ENCODE measurements at regions of chr4 and their contacts with region 1.

Region 1: GRCh38 chr4:118968005-118968404 is 79.4 kb downstream of the SYNPO2 start:
- DNase-seq: peak; percentile 41 to 72 (median 47)
- ATAC-seq: peak; percentile 85 to 90
- H3K4me3 ChIP-seq: no peak overlapping the region
- H3K27ac ChIP-seq: peak overlapping the region; percentile 80
- H3K4me1 ChIP-seq: peaks cover 8% of the 10 kb centered on the region
- H3K27me3 ChIP-seq: no peaks in the 10 kb centered on the region

Region 2: GRCh38 chr4:118765399-118765798 is 202.6 kb before region 1 on chr4:
- intact Hi-C with region 1: loop called (anchors 10 kb)
- DNase-seq: no peak
- ATAC-seq: peak; percentile 86 to 94
- H3K4me3 ChIP-seq: no peak overlapping the region
- H3K27ac ChIP-seq: no peak overlapping the region
- H3K4me1 ChIP-seq: peaks cover 5% of the 10 kb centered on the region
- H3K27me3 ChIP-seq: no peaks in the 10 kb centered on the region

Region 3: GRCh38 chr4:118772081-118772766 is 195.8 kb before region 1 on chr4:
- intact Hi-C with region 1: loop called (anchors 10 kb)
- DNase-seq: no peak
- ATAC-seq: peak; percentile 81 to 82
- H3K4me3 ChIP-seq: no peak overlapping the region
- H3K27ac ChIP-seq: peak overlapping the region; percentile 39
- H3K4me1 ChIP-seq: peaks cover 6% of the 10 kb centered on the region
- H3K27me3 ChIP-seq: no peaks in the 10 kb centered on the region

Region 4: DNA sequence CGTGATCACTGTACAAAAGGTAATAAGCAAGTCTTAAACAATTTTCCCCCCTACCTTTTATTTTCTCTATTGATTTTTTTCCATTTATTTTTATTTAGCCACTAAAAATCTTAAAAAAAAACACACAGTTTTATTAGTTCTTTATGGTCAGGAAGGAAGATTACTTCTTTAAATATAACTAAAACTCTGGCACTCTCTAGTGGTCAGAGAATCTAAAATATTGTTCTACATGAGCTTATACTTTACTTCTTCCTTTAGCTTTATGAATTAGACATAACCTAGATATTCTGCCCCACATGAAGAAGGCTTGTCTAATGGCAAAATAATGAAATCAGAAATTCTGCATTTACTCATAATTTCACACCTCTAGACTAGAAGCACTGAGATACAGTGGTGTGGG is 525.4 kb after region 1 on chr4:
- intact Hi-C with region 1: no loop called
- DNase-seq: no peak
- ATAC-seq: no peak
- H3K4me3 ChIP-seq: no peak overlapping the region
- H3K27ac ChIP-seq: no peak overlapping the region
- H3K4me1 ChIP-seq: no peaks in the 10 kb centered on the region
- H3K27me3 ChIP-seq: no peaks in the 10 kb centered on the region

Measured in right cardiac atrium (tissue), 5 donors.